CD8-positive, alpha-beta memory T cell (primary cell): ENCODE measurements at regions of chr4 and their contacts with region 1.

Region 1: GRCh38 chr4:81069706-81070331 is 39.3 kb downstream of the BMP3 start:
- DNase-seq: peak; percentile 19 to 67 (median 40)
- H3K4me3 ChIP-seq: no peak overlapping the region
- H3K4me3 Mint-ChIP-seq: no peak overlapping the region
- H3K27ac ChIP-seq: no peak overlapping the region
- H3K27ac Mint-ChIP-seq: no peak overlapping the region
- H3K4me1 ChIP-seq: no peaks in the 10 kb centered on the region
- H3K4me1 Mint-ChIP-seq: no peaks in the 10 kb centered on the region
- H3K27me3 ChIP-seq: no peaks in the 10 kb centered on the region
- H3K27me3 Mint-ChIP-seq: peaks cover 8 to 26% of the 10 kb centered on the region in 2 donors

Region 2: DNA sequence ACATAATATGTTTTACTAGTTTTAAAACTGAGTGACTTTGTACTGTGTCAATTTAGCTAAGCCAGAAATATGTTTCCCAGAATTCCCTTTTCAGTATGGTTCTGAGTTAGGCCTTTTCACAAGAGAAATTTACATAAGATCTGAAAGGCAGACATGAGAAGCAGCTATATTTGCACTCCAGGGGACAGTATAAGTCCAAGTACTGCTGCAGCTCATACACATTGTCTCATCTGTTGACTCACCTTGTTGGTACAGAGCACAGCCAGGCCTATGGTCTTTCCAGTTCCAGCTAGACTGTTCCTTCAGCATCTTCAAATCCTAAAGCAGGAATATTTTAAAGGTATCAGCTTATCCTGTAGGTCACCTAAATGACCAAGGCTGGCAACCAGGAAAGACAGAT is 14.2 kb after region 1 on chr4:
- CTCF ChIA-PET with region 1: interaction called, 10 read pairs
- POLR2A ChIA-PET with region 1: no interaction called
- DNase-seq: no peak
- H3K4me3 ChIP-seq: no peak overlapping the region
- H3K4me3 Mint-ChIP-seq: no peak overlapping the region
- H3K27ac ChIP-seq: no peak overlapping the region
- H3K27ac Mint-ChIP-seq: no peak overlapping the region
- H3K4me1 ChIP-seq: no peaks in the 10 kb centered on the region
- H3K4me1 Mint-ChIP-seq: no peaks in the 10 kb centered on the region
- H3K27me3 ChIP-seq: no peaks in the 10 kb centered on the region
- H3K27me3 Mint-ChIP-seq: peaks cover 3 to 8% of the 10 kb centered on the region in 2 donors

Region 3: DNA sequence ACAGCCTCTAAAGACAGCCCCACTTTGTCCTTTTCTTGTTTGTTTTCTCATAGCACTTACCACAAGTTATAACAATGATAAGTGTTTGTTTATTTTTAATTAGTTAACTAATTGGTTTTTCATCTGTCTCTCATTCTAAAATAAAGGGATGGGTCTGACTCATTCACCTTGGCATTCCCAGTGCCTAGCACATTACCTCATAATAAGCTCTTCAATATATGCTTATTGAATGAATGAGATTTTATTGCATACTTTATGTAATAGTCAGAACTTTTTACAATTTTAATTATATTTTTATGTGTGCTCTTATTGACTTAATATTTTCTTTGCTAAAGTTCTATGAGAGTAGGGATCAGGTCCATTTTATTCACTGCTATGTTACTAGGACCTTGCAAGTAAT is 168.0 kb after region 1 on chr4:
- CTCF ChIA-PET with region 1: no interaction called
- POLR2A ChIA-PET with region 1: no interaction called
- DNase-seq: no peak
- H3K4me3 ChIP-seq: no peak overlapping the region
- H3K4me3 Mint-ChIP-seq: no peak overlapping the region
- H3K27ac ChIP-seq: no peak overlapping the region
- H3K27ac Mint-ChIP-seq: no peak overlapping the region
- H3K4me1 ChIP-seq: no peaks in the 10 kb centered on the region
- H3K4me1 Mint-ChIP-seq: no peaks in the 10 kb centered on the region
- H3K27me3 ChIP-seq: no peaks in the 10 kb centered on the region
- H3K27me3 Mint-ChIP-seq: peaks cover 6 to 16% of the 10 kb centered on the region in 2 donors

Region 4: DNA sequence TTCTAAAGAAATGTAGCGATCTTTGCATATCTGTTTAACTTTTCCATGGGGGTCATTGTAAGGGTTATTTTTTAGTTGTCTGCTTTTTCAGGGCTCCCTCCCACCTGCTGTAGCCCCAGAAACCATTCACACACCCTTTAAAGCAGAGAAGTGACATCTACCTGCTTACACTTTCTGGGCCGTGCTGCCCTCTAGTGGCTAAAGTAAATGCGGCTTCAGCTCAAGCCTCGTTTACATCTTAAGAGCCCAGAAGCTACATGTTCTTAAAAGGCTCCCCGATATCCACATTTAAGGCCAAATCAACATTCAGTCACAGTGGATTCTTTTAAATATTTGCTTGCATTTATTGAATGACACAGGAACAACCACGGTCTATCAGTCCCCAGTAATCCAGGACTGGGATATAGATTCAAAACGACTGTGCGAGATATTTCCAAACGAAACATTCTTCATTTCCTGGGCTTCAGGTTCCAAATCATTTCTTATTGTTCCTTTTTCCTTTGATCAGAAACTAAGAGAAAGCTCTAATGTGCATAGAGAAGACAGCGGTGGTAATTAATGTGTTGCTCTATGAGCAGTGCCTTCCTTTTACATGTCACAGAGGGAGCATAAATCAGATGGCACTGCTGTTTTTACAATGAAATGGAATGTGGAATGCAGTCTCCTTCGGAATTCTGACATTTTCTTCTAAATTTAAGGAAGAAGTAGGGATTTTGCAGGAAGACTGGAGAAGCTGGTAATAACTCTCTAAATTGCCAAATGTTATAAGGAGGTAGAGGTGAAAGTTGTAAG is 282.0 kb after region 1 on chr4:
- CTCF ChIA-PET with region 1: interaction called, 31 read pairs
- POLR2A ChIA-PET with region 1: no interaction called
- DNase-seq: peak; percentile 19 to 64 (median 33)
- H3K4me3 ChIP-seq: no peak overlapping the region
- H3K4me3 Mint-ChIP-seq: no peak overlapping the region
- H3K27ac ChIP-seq: no peak overlapping the region
- H3K27ac Mint-ChIP-seq: no peak overlapping the region
- H3K4me1 ChIP-seq: no peaks in the 10 kb centered on the region
- H3K4me1 Mint-ChIP-seq: no peaks in the 10 kb centered on the region
- H3K27me3 ChIP-seq: no peaks in the 10 kb centered on the region
- H3K27me3 Mint-ChIP-seq: peaks cover 1 to 37% of the 10 kb centered on the region in 2 donors